ENCODE measurements at regions of chr6 and their contacts with region 1.

Region 1: DNA sequence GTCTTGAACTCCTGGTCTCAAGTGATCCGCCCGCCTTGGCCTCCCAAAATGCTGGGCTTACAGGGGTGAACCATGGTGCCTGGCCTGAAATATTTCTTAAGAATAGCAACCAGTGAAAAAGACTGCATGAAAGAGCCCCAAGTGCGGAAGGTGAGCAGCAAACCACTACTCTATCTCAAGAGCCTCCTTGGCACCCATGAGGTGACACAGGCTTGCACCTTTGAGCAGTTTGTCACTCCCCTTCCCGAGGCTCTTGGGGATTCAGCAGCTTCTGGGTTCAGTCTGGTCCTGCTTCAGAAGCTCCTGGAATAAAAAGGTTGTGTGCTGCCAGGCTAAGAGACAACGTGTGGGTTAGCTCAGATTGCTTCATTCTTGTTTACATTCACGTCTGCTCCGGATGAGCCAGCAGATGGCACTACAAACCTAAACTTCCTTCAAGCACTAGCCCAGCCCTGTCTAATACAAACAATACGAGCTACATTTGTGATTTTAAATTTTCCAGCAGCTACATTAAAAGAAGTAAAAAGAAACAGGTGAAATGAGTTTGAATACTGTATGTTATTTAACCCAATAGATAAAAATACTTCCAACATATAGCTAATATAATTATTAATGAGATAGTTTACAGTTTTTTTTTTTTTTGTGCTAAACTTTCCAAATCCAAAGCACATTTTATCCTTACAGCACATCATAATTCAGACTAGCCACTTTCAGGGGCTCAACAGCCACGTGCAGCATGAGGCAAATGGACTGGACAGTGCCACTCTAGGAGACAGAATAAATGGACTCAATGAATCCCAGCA is 46.2 kb downstream of the GJA10 start:
- DNase-seq: peak; percentile 61
- ATAC-seq: peak; percentile 88 to 94
- H3K4me3 ChIP-seq: no peak overlapping the region
- H3K27ac ChIP-seq: no peak overlapping the region
- H3K4me1 ChIP-seq: peaks cover 13% of the 10 kb centered on the region
- H3K27me3 ChIP-seq: no peaks in the 10 kb centered on the region
- CTCF ChIP-seq: peak; percentile 76

Region 2: DNA sequence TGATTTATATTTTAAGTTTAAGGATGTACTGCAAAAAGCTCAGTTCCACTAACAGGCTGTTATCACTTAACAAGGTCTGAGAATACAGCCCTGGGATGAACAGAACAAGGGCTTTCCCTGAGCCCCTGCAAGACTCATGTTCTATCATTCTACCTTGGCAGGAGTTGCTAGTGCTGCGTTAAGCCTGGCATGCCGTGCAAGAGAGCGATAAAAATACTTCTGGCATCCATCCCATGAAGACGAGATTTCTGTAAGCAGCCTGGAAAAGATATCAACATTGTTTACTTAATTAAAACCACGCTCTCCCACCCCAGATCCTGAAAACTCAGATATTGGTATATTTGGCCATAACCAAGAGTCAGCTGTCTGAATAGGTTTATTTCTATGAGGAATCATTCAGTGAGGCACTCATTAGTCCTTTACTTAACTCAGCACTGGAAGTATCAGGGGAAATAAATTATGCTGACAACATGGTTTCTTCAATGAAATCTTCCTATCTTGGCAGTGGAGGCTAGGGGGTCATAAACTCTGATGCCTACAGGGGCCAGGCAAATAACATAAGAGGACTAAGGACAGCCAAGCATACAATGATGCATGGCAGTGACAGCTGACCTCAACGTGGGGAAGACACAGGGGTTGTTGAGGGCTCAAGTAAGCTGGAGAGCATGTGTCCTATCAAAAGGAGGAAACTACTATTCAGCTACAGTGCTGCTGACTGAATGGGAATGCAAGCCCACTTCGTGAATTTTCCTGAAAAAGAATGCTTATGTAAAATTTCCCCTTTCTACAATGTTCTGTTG is 264.3 kb before region 1 on chr6:
- intact Hi-C with region 1: no loop called
- DNase-seq: no peak
- ATAC-seq: no peak
- H3K4me3 ChIP-seq: no peak overlapping the region
- H3K27ac ChIP-seq: no peak overlapping the region
- H3K4me1 ChIP-seq: no peaks in the 10 kb centered on the region
- H3K27me3 ChIP-seq: no peaks in the 10 kb centered on the region
- CTCF ChIP-seq: no peak

Region 3: DNA sequence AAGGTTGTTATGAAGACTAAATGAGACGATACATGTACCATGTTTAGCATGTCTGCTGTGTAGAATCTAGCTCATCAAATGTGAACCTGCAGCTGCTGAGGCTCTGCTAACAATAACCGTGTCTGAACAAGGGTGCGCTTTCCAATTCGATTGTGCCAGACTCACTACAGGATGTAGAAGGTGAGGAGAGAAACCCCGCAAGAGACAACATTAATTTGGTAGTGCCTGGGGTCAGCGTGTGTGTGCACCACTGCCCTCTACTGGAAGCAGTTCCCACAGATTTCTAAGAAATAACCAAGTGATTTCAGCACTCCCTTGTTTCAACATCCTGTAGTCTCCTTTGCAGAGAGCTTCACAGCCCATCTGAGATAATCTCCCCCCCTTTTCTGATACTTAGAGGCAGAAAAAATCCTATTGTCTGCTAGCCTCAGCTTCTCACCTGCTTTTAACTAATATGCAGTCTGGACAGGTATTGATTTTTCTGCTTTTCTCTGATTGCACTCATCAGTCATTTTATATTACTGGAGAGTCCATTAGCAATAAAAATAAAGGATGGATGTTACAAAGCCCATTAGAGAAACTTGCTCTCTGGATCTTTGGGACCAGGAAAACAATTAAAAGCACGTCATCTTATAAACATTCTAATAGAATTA is 452.9 kb after region 1 on chr6:
- intact Hi-C with region 1: loop called (anchors 10 kb)
- DNase-seq: no peak
- ATAC-seq: peak; percentile 79 to 81
- H3K4me3 ChIP-seq: no peak overlapping the region
- H3K27ac ChIP-seq: no peak overlapping the region
- H3K4me1 ChIP-seq: peaks cover 5% of the 10 kb centered on the region
- H3K27me3 ChIP-seq: no peaks in the 10 kb centered on the region
- CTCF ChIP-seq: peak; percentile 77

Region 4: GRCh38 chr6:90478789-90479602 is 538.6 kb after region 1 on chr6:
- intact Hi-C with region 1: loop called (anchors 10 kb)
- DNase-seq: peak; percentile 87
- ATAC-seq: peak; percentile 98 to 99
- H3K4me3 ChIP-seq: no peak overlapping the region
- H3K27ac ChIP-seq: no peak overlapping the region
- H3K4me1 ChIP-seq: peaks cover 10% of the 10 kb centered on the region
- H3K27me3 ChIP-seq: no peaks in the 10 kb centered on the region
- CTCF ChIP-seq: peak; percentile 94

Measured in lower lobe of right lung (tissue), 2 donors.